B cell (primary cell): ENCODE measurements at regions of chr5 and their contacts with region 1.

Region 1: DNA sequence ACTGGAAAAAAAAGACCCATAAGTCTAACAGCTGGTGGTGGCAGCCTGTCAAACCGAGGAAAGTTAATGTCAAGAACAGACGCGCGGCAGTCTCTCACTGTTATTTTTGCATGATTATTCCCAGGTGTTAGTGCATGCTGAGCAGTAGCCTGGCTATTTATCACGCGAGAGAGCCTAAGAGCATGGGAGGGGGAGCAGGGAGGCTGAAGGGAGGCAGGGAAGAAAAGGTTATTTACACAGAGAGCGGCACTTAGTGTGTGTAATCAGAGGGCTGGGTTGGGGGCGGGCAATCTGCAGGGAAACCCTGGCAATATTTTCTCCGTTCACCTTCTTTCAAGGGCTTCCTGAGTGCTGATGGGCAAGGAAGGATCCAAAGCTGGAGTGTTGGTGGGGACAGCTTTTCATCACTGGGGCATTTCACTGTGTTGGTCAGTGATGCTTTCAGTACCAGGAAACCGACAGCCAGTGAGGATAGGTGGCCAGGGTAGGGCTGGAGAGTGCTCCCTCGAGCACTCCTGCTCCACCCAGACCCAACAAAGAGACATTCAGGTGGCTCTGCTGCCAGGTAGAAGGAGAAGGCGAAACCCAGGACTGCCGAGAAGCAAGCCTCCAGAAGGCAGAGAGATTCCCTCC is 39.6 kb downstream of the ZNF608 start:
- DNase-seq: peak; percentile 19
- ATAC-seq: no peak
- H3K4me3 ChIP-seq: peak overlapping the region in 2 of 5 experiments; percentile 24 to 30
- H3K4me3 Mint-ChIP-seq: peak overlapping the region; percentile 80
- H3K27ac ChIP-seq: peak overlapping the region; percentile 57 to 71
- H3K27ac Mint-ChIP-seq: peak overlapping the region; percentile 87
- H3K4me1 ChIP-seq: peaks cover 66 to 67% of the 10 kb centered on the region in 2 donors
- H3K4me1 Mint-ChIP-seq: peaks cover 82% of the 10 kb centered on the region
- H3K27me3 ChIP-seq: peaks cover 0 to 8% (median 0%) of the 10 kb centered on the region in 4 experiments
- H3K27me3 Mint-ChIP-seq: no peaks in the 10 kb centered on the region
- CTCF ChIP-seq: no peak

Region 2: GRCh38 chr5:124583469-124584350 is 123.1 kb before region 1 on chr5:
- CTCF ChIA-PET with region 1: no interaction called
- POLR2A ChIA-PET with region 1: no interaction called
- intact Hi-C with region 1: loop called (anchors 2 kb)
- DNase-seq: peak; percentile 84
- ATAC-seq: peak; percentile 94
- H3K4me3 ChIP-seq: peak overlapping the region in 3 of 5 experiments; percentile 13 to 33 (median 21)
- H3K4me3 Mint-ChIP-seq: peak overlapping the region; percentile 74
- H3K27ac ChIP-seq: peak overlapping the region; percentile 56 to 60
- H3K27ac Mint-ChIP-seq: peak overlapping the region; percentile 89
- H3K4me1 ChIP-seq: peaks cover 19 to 27% of the 10 kb centered on the region in 2 donors
- H3K4me1 Mint-ChIP-seq: peaks cover 32% of the 10 kb centered on the region
- H3K27me3 ChIP-seq: no peaks in the 10 kb centered on the region
- H3K27me3 Mint-ChIP-seq: no peaks in the 10 kb centered on the region
- CTCF ChIP-seq: no peak

Region 3: GRCh38 chr5:124669956-124670721 is 36.7 kb before region 1 on chr5:
- CTCF ChIA-PET with region 1: no interaction called
- POLR2A ChIA-PET with region 1: no interaction called
- intact Hi-C with region 1: no loop called
- DNase-seq: no peak
- ATAC-seq: no peak
- H3K4me3 ChIP-seq: no peak overlapping the region
- H3K4me3 Mint-ChIP-seq: no peak overlapping the region
- H3K27ac ChIP-seq: no peak overlapping the region
- H3K27ac Mint-ChIP-seq: no peak overlapping the region
- H3K4me1 ChIP-seq: peaks cover 5 to 11% of the 10 kb centered on the region in 2 donors
- H3K4me1 Mint-ChIP-seq: peaks cover 18% of the 10 kb centered on the region
- H3K27me3 ChIP-seq: no peaks in the 10 kb centered on the region
- H3K27me3 Mint-ChIP-seq: no peaks in the 10 kb centered on the region
- CTCF ChIP-seq: no peak

Region 4: DNA sequence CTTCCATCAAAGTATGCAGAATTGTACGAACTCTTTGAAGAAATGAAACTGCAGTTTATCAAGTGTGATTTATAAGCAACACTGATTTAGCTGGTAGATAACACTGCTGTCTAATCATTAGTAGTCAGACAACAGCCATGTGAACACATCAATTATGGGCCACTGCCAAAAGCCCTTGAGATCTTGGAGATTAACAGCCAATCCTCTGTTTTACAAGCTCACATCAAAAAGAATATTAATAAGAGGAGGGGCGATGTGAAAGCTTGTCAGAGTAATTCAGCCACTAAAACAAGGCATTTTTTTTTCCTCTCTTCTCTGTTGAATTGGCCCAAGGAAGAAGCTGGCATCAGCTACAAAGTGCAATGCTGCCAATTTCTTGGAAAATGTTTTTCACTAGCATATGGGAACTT is 11.5 kb after region 1 on chr5:
- CTCF ChIA-PET with region 1: interaction called, 5 read pairs
- POLR2A ChIA-PET with region 1: interaction called, 7 read pairs
- intact Hi-C with region 1: loop called (anchors 2 kb)
- DNase-seq: no peak
- ATAC-seq: no peak
- H3K4me3 ChIP-seq: no peak overlapping the region
- H3K4me3 Mint-ChIP-seq: peak overlapping the region; percentile 51
- H3K27ac ChIP-seq: no peak overlapping the region
- H3K27ac Mint-ChIP-seq: no peak overlapping the region
- H3K4me1 ChIP-seq: peaks cover 32 to 35% of the 10 kb centered on the region in 2 donors
- H3K4me1 Mint-ChIP-seq: peaks cover 58% of the 10 kb centered on the region
- H3K27me3 ChIP-seq: no peaks in the 10 kb centered on the region
- H3K27me3 Mint-ChIP-seq: no peaks in the 10 kb centered on the region
- CTCF ChIP-seq: no peak

Region 5: DNA sequence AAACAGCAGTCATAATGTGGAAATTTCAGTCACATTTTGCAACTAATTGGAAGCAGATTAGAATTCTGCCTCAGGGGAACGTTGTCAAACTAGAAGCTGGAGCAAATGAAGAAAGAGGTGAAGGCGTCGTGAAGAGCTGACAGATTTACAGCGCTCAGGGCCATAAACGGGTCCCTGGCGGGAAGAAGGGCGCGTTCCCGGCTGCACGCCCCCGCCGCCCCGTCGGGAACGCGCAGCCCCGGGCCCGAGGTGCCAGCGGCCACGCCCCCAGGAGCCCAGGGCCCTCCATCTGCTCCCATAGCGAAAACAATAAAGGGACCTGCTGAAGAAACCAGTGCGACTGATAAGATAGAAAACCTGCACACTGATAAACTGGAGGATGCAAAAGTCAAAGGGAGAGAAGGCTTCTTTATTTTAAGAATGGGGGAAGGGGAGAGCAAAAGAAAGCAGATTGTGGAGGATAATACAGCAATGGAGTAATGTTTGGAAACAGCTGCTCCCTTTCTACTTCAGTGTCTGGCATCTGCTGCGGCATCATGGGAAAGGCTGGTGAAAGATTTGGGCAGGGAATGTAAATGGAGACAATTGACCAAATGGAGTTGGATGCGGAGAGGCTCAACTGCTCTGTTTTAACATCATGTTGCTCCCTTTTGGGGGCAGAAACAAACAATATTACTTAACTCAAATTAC is 28.5 kb after region 1 on chr5:
- CTCF ChIA-PET with region 1: interaction called, 3 read pairs
- POLR2A ChIA-PET with region 1: interaction called, 10 read pairs
- intact Hi-C with region 1: no loop called
- DNase-seq: peak; percentile 40
- ATAC-seq: peak; percentile 45
- H3K4me3 ChIP-seq: peak overlapping the region; percentile 10 to 59 (median 44)
- H3K4me3 Mint-ChIP-seq: peak overlapping the region; percentile 83
- H3K27ac ChIP-seq: no peak overlapping the region
- H3K27ac Mint-ChIP-seq: peak overlapping the region; percentile 3
- H3K4me1 ChIP-seq: peaks cover 58 to 62% of the 10 kb centered on the region in 2 donors
- H3K4me1 Mint-ChIP-seq: peaks cover 74% of the 10 kb centered on the region
- H3K27me3 ChIP-seq: peaks cover 0 to 3% (median 0%) of the 10 kb centered on the region in 4 experiments
- H3K27me3 Mint-ChIP-seq: peaks cover 4% of the 10 kb centered on the region
- CTCF ChIP-seq: no peak

Region 6: GRCh38 chr5:125043781-125044391 is 337.0 kb after region 1 on chr5:
- CTCF ChIA-PET with region 1: no interaction called
- POLR2A ChIA-PET with region 1: no interaction called
- intact Hi-C with region 1: no loop called
- DNase-seq: no peak
- ATAC-seq: no peak
- H3K4me3 ChIP-seq: no peak overlapping the region
- H3K4me3 Mint-ChIP-seq: no peak overlapping the region
- H3K27ac ChIP-seq: no peak overlapping the region
- H3K27ac Mint-ChIP-seq: no peak overlapping the region
- H3K4me1 ChIP-seq: peaks cover 2% of the 10 kb centered on the region in 2 donors
- H3K4me1 Mint-ChIP-seq: peaks cover 14% of the 10 kb centered on the region
- H3K27me3 ChIP-seq: no peaks in the 10 kb centered on the region
- H3K27me3 Mint-ChIP-seq: no peaks in the 10 kb centered on the region
- CTCF ChIP-seq: no peak